Left lung (tissue), 14 donors: ENCODE measurements at regions of chr6 and their contacts with region 1.

Region 1: GRCh38 chr6:31399589-31400466 is 3.6 kb upstream of the MICA start:
- DNase-seq: peak; percentile 85 to 95 (median 92)
- ATAC-seq: peak; percentile 79
- H3K4me3 ChIP-seq: peak overlapping the region; percentile 71 to 75
- H3K27ac ChIP-seq: peak overlapping the region; percentile 96 to 99
- H3K4me1 ChIP-seq: peaks cover 18 to 68% of the 10 kb centered on the region in 2 donors
- H3K27me3 ChIP-seq: no peaks in the 10 kb centered on the region
- CTCF ChIP-seq: peak; percentile 75 to 80

Region 2: GRCh38 chr6:31441365-31442267 is 41.8 kb after region 1 on chr6:
- intact Hi-C with region 1: loop called in 1 of 2 experiments (anchors 5 kb)
- DNase-seq: peak; percentile 36 to 98 (median 70)
- ATAC-seq: peak; percentile 100
- H3K4me3 ChIP-seq: no peak overlapping the region
- H3K27ac ChIP-seq: no peak overlapping the region
- H3K4me1 ChIP-seq: peaks cover 0 to 5% of the 10 kb centered on the region in 2 donors
- H3K27me3 ChIP-seq: peaks cover 0 to 25% of the 10 kb centered on the region in 2 donors
- CTCF ChIP-seq: peak; percentile 80 to 83